ENCODE measurements at regions of chr4 and their contacts with region 1.

Region 1: GRCh38 chr4:54961357-54961975 is 163.9 kb downstream of the KDR start:
- DNase-seq: peak; percentile 42
- H3K4me3 ChIP-seq: no peak overlapping the region; a peak in 1 of 4 replicates
- H3K27ac ChIP-seq: no peak overlapping the region
- H3K4me1 ChIP-seq: no peaks in the 10 kb centered on the region; a peak in 1 of 4 replicates
- H3K27me3 ChIP-seq: no peaks in the 10 kb centered on the region; the same call in 1 of the 2 replicates
- CTCF ChIP-seq: peak; percentile 74
- EP300 ChIP-seq: no peak
- RAD21 ChIP-seq: peak; percentile 84

Region 2: DNA sequence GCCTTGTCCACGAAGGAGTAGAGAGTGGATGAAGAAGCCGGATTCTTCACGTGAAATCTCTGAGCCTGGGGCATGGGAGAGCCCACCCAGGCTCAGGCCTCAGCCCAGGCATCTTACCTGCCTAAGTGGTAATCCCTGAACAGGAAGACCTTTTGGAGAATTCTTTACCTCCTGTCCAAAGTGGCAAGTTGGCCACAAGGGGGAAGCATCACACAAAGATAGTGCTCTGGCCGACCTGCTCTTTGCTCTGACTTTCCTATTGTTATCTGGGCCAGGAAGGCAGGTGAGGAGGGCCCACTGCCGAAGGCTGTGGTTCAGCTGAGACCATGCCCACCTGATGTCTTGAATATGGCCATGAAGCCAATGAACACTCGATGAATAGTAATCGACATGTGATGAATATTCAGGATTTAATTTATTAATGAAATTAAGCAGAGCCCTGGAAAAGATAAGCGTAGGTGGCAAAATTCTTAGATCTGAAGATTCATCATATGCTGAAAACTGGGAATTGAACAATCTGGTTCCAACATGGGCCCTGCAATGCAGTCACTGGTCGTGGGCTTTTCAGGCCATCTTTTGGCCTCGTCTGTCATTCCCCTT is 638.5 kb before region 1 on chr4:
- CTCF ChIA-PET with region 1: interaction called, 24 read pairs
- POLR2A ChIA-PET with region 1: no interaction called
- DNase-seq: peak; percentile 82
- H3K4me3 ChIP-seq: peak overlapping the region in 1 of 2 experiments; percentile 25; a peak in 1 of 4 replicates
- H3K27ac ChIP-seq: no peak overlapping the region
- H3K4me1 ChIP-seq: peaks cover 0 to 2% of the 10 kb centered on the region in 2 experiments; a peak in 1 of 4 replicates
- H3K27me3 ChIP-seq: no peaks in the 10 kb centered on the region
- CTCF ChIP-seq: peak; percentile 81
- EP300 ChIP-seq: no peak
- RAD21 ChIP-seq: peak; percentile 95

Region 3: DNA sequence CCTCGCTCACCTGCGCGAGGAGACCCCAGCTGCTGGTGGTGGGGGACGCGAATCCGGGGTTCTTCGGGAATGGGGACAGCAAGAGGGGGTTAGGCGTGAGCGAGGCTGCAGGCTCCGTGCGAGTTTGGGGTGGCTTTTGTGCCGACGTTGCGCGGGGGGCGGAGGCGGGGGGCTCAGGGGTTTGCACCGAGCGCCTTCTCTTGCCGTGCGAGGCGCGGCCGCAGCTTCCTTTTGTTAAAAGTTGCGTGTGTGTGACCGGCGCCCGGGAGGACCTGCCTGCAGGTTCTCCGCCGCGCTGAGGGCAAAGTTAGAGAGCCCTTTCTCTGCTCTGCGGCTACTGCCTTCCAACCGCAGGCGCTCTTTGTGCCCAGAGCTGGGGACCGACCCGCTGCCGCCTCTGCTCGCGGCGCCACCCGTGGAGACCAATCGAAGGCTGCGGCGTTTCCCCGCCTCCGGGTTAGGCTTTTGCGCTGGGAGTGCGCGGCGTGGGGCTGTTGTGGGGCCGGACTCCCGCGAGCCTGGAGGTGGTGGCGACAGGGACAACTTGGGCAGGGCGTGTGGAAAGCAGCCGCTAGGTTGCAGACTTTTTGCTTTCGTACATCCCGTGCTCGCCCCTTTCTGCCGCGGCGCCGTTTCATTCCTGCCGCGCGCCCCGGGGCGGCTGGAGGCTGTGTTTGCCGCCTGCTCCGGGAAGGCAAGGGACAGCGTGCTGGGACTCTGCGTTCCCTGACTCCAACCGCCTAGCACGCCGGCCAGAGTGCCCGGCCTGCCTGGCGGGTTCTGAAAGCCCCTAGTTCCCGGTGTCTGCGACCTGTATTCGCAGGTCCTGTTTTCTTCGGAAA is 303.0 kb before region 1 on chr4:
- CTCF ChIA-PET with region 1: interaction called, 20 read pairs
- POLR2A ChIA-PET with region 1: no interaction called
- DNase-seq: peak; percentile 78
- H3K4me3 ChIP-seq: peak overlapping the region; percentile 53 to 76
- H3K27ac ChIP-seq: no peak overlapping the region
- H3K4me1 ChIP-seq: peaks cover 11 to 13% of the 10 kb centered on the region in 2 experiments; a peak in 3 of 4 replicates
- H3K27me3 ChIP-seq: 0 out of 2 replicates have a peak, but pooled peaks cover 14% of the 10 kb centered on the region
- CTCF ChIP-seq: peak; percentile 46
- EP300 ChIP-seq: no peak
- RAD21 ChIP-seq: no peak

Measured in SK-N-SH (cell line).